CD8-positive, alpha-beta T cell (primary cell): ENCODE measurements at regions of chr14 and their contacts with region 1.

Region 1: GRCh38 chr14:44586910-44587309 is 79.8 kb upstream of the FSCB start:
- DNase-seq: no peak
- ATAC-seq: no peak
- H3K4me3 ChIP-seq: no peak overlapping the region
- H3K4me3 Mint-ChIP-seq: no peak overlapping the region
- H3K27ac ChIP-seq: no peak overlapping the region
- H3K27ac Mint-ChIP-seq: no peak overlapping the region
- H3K4me1 ChIP-seq: no peaks in the 10 kb centered on the region
- H3K4me1 Mint-ChIP-seq: no peaks in the 10 kb centered on the region
- H3K27me3 ChIP-seq: no peaks in the 10 kb centered on the region
- H3K27me3 Mint-ChIP-seq: no peaks in the 10 kb centered on the region
- CTCF ChIP-seq: no peak

Region 2: DNA sequence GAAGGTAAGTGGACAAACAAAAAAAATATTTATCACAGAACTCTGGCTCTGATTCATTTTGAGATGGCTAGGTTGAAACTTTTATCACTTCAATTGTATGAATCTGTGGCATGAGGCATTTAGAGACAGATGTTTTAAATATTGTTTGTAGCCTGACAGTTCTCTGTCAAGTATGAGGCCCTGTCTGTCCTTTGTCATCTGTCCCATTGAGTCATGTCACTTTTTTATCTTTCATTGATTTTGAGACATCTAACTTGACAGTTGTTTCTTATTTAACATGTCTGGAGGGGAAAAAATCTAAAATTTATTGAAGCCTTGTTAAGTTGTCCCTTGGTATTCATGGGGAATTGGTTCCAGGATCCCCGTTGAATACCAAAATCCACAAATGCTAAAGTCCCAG is 909.3 kb before region 1 on chr14:
- CTCF ChIA-PET with region 1: no interaction called
- POLR2A ChIA-PET with region 1: no interaction called
- intact Hi-C with region 1: no loop called
- DNase-seq: no peak
- ATAC-seq: no peak
- H3K4me3 ChIP-seq: no peak overlapping the region
- H3K4me3 Mint-ChIP-seq: no peak overlapping the region
- H3K27ac ChIP-seq: no peak overlapping the region
- H3K27ac Mint-ChIP-seq: no peak overlapping the region
- H3K4me1 ChIP-seq: no peaks in the 10 kb centered on the region
- H3K4me1 Mint-ChIP-seq: no peaks in the 10 kb centered on the region
- H3K27me3 ChIP-seq: no peaks in the 10 kb centered on the region
- H3K27me3 Mint-ChIP-seq: no peaks in the 10 kb centered on the region
- CTCF ChIP-seq: no peak

Region 3: DNA sequence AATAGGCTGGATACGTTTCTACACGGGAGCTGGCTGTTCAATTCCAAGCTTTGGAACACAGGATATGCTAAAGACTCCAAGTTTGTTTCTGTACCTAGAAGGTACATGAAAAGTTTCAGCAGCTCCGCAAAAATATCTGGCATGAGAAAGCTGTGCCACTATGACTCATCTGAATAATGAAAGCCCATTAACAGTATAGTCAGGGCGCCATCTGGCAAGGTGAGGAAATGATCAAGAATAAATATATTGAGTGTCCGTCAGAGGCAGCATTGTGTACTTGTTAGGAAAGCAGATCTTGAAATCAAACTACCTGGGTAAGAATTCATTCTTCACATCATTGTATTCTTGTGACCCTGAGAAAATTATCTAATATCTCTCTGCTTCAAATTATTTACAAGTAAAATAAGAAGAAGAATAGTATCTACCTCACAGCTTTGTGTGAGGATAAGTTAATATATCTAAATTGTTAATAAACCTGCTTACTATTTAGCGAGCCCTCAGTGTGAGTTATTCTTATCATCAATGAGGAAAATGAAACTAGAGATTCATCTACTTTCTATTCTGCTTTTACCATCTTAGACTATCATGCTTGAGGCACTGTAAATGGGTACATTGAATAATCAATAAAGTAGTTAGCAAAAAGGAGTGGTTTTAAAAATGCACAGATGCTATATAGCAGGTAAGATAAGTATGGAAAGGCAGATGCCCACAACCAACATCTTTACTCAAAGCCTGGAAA is 133.3 kb before region 1 on chr14:
- CTCF ChIA-PET with region 1: no interaction called
- POLR2A ChIA-PET with region 1: no interaction called
- intact Hi-C with region 1: no loop called
- DNase-seq: no peak
- ATAC-seq: no peak
- H3K4me3 ChIP-seq: no peak overlapping the region
- H3K4me3 Mint-ChIP-seq: no peak overlapping the region
- H3K27ac ChIP-seq: no peak overlapping the region
- H3K27ac Mint-ChIP-seq: no peak overlapping the region
- H3K4me1 ChIP-seq: no peaks in the 10 kb centered on the region
- H3K4me1 Mint-ChIP-seq: no peaks in the 10 kb centered on the region
- H3K27me3 ChIP-seq: no peaks in the 10 kb centered on the region
- H3K27me3 Mint-ChIP-seq: no peaks in the 10 kb centered on the region
- CTCF ChIP-seq: no peak

Region 4: DNA sequence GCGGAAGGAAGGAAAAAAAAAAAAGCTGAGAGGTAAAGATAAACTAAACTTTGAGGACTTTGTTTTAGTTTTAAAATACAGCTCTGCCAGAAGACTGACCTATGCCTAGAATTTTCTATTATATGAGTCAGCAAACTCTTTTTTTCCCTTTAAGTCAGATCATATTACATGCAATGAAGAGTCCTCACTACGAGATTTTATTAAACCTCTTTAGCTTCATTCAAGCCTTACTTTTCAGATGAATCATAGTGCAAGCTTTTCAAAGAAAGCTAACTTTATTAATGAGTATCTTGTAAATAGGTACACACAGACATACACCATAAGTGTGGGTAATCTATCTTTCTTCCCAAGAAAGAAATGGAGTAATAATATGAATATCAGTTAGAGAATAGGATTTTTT is 22.0 kb before region 1 on chr14:
- CTCF ChIA-PET with region 1: no interaction called
- POLR2A ChIA-PET with region 1: no interaction called
- intact Hi-C with region 1: loop called in 1 of 2 experiments (anchors 1 kb)
- DNase-seq: no peak
- ATAC-seq: no peak
- H3K4me3 ChIP-seq: no peak overlapping the region
- H3K4me3 Mint-ChIP-seq: no peak overlapping the region
- H3K27ac ChIP-seq: no peak overlapping the region
- H3K27ac Mint-ChIP-seq: no peak overlapping the region
- H3K4me1 ChIP-seq: no peaks in the 10 kb centered on the region
- H3K4me1 Mint-ChIP-seq: no peaks in the 10 kb centered on the region
- H3K27me3 ChIP-seq: no peaks in the 10 kb centered on the region
- H3K27me3 Mint-ChIP-seq: no peaks in the 10 kb centered on the region
- CTCF ChIP-seq: no peak